ENCODE measurements at regions of chr4 and their contacts with region 1.

Region 1: GRCh38 chr4:77367638-77368037 is 210.6 kb downstream of the CCNG2 start:
- DNase-seq: no peak
- H3K4me3 Mint-ChIP-seq: no peak overlapping the region
- H3K27ac Mint-ChIP-seq: no peak overlapping the region
- H3K4me1 Mint-ChIP-seq: no peaks in the 10 kb centered on the region
- H3K27me3 Mint-ChIP-seq: peaks cover 3% of the 10 kb centered on the region

Region 2: DNA sequence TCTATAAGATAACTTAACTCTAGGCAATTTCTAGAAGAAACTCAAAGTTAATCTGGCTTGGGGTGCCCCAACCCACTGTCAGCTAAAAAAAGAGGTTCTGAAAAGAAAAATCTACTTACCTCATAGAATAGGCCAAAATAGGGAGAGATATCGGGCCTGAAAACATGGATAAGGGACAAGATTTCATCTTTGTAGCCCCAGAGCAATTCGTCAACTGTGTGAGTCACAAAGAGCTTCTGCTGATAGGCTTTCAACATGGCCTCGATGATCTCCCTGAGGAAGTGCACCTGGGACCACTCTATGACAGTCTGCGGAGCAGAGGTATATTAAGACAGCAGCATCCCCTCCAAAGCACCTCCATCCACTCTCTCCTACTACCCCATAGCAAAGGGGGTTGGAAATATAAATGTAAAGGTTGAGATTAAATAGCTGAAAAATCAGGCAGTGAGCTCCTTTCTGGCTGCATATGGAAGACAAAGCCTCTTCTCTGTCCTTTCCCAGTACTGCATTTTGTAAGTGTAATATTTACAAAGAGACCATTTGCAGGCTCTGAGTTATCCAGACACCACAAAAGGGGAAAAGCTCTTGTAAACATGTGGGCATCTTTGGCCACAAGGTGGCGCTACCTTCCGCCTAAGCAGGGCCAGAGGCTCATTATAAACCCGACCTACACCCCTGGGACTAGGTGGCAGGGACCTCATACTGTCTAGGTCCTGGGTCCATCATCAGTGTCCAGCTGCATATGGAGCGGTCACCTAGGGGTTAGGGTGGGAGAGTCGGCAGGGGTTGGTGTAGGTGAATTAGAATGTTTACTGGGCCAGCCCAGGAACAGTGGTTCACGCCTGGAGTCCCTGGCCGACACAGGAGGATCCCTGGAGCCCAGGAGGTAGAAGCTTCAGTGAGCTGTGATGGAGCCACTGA is 1188.0 kb before region 1 on chr4:
- intact Hi-C with region 1: no loop called
- DNase-seq: peak; percentile 63
- H3K4me3 Mint-ChIP-seq: no peak overlapping the region
- H3K27ac Mint-ChIP-seq: no peak overlapping the region
- H3K4me1 Mint-ChIP-seq: no peaks in the 10 kb centered on the region
- H3K27me3 Mint-ChIP-seq: no peaks in the 10 kb centered on the region

Region 3: DNA sequence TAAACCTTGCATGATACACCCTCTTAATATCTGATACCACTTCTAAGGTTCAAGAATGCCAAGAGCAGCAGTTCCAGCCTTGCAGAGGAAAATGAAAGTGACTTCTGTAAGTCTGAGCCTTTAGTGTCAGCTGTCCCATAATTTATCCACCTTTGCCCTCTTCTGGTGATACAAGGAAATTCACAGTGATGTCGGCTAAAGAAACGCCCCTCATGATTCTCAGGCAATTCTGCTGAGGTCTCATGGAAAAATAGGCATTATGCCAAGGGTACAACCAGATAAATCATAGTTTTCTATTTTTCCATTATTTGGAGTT is 65.7 kb after region 1 on chr4:
- intact Hi-C with region 1: loop called (anchors 5 kb)
- DNase-seq: peak; percentile 4
- H3K4me3 Mint-ChIP-seq: no peak overlapping the region
- H3K27ac Mint-ChIP-seq: no peak overlapping the region
- H3K4me1 Mint-ChIP-seq: peaks cover 8% of the 10 kb centered on the region
- H3K27me3 Mint-ChIP-seq: no peaks in the 10 kb centered on the region

Region 4: GRCh38 chr4:77697860-77698590 is 330.4 kb after region 1 on chr4:
- intact Hi-C with region 1: loop called (anchors 5 kb)
- DNase-seq: no peak
- H3K4me3 Mint-ChIP-seq: no peak overlapping the region
- H3K27ac Mint-ChIP-seq: no peak overlapping the region
- H3K4me1 Mint-ChIP-seq: no peaks in the 10 kb centered on the region
- H3K27me3 Mint-ChIP-seq: peaks cover 7% of the 10 kb centered on the region